Activated CD8-positive, alpha-beta T cell treated with anti-CD3 and anti-CD28 coated beads for 36 hours (primary cell): ENCODE measurements at regions of chrX and their contacts with region 1.

Region 1: GRCh38 chrX:47619486-47620302 is at the start of gene SYN1:
- DNase-seq: peak; percentile 82
- ATAC-seq: peak; percentile 84
- H3K4me3 Mint-ChIP-seq: peak within 1 kb of the TSS; percentile 54
- H3K27ac Mint-ChIP-seq: no peak within 1 kb of the TSS
- H3K4me1 Mint-ChIP-seq: peaks cover 14% of the 10 kb centered on the region
- H3K27me3 Mint-ChIP-seq: peaks cover 7% of the 10 kb centered on the region
- CTCF ChIP-seq: no peak
- total RNA-seq, gene SYN1: 0.67 to 0.74 TPM

Region 2: GRCh38 chrX:47560831-47561652 is 58.7 kb before region 1 on chrX and contains the start of gene ARAF:
- CTCF ChIA-PET with region 1: no interaction called
- POLR2A ChIA-PET with region 1: no interaction called
- intact Hi-C with region 1: loop called (anchors 10 kb)
- DNase-seq: peak; percentile 96
- ATAC-seq: peak; percentile 91
- H3K4me3 Mint-ChIP-seq: peak within 1 kb of the TSS; percentile 94
- H3K27ac Mint-ChIP-seq: peak within 1 kb of the TSS; percentile 93
- H3K4me1 Mint-ChIP-seq: peaks cover 39% of the 10 kb centered on the region
- H3K27me3 Mint-ChIP-seq: no peaks in the 10 kb centered on the region
- CTCF ChIP-seq: no peak
- total RNA-seq, gene ARAF: 53.9 to 60.9 TPM

Region 3: GRCh38 chrX:47631676-47632075 is 12.0 kb after region 1 on chrX:
- CTCF ChIA-PET with region 1: no interaction called
- POLR2A ChIA-PET with region 1: no interaction called
- intact Hi-C with region 1: no loop called
- DNase-seq: no peak
- ATAC-seq: no peak
- H3K4me3 Mint-ChIP-seq: no peak overlapping the region
- H3K27ac Mint-ChIP-seq: no peak overlapping the region
- H3K4me1 Mint-ChIP-seq: peaks cover 18% of the 10 kb centered on the region
- H3K27me3 Mint-ChIP-seq: no peaks in the 10 kb centered on the region
- CTCF ChIP-seq: no peak

Region 4: GRCh38 chrX:47751670-47752069 is 132.0 kb after region 1 on chrX:
- CTCF ChIA-PET with region 1: no interaction called
- POLR2A ChIA-PET with region 1: no interaction called
- intact Hi-C with region 1: no loop called
- DNase-seq: peak; percentile 55
- ATAC-seq: peak; percentile 62
- H3K4me3 Mint-ChIP-seq: no peak overlapping the region
- H3K27ac Mint-ChIP-seq: no peak overlapping the region
- H3K4me1 Mint-ChIP-seq: no peaks in the 10 kb centered on the region
- H3K27me3 Mint-ChIP-seq: peaks cover 9% of the 10 kb centered on the region
- CTCF ChIP-seq: no peak